ENCODE measurements at regions of chr11 and their contacts with region 1.

Region 1: DNA sequence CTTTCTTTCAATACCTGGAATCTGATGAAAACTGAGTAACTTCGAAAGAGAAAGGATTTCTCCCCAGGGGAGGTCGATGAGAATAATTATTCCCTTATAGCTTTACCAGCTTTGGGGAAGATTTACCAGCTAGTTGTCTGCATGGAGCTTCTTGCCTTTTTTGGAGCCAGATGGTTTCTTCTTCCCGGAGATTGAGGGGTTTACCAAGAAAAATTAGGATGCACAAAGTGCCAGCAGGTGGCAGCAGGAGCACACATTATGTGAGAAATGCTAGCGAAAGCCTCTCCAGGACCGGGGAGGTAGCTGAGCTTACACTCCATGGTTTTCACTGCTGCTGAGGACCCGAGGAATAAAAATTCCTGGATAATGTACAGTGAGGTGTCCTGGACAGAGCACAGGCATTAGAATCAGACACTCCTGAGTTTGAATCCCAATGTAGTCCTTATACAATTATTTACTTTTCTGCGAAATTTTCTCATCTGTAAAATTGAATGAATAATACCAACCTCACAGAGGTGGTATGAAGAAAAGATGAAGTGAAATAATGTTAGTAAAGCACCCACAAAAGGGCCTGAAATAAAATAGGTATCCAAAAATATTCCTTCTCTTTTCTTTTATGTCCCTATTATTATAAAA is 46.0 kb upstream of the PARVA start:
- DNase-seq: peak; percentile 61 to 68
- H3K4me3 ChIP-seq: no peak overlapping the region
- H3K27ac ChIP-seq: no peak overlapping the region
- H3K4me1 ChIP-seq: no peaks in the 10 kb centered on the region
- H3K27me3 ChIP-seq: no peaks in the 10 kb centered on the region
- CTCF ChIP-seq: peak; percentile 82

Region 2: DNA sequence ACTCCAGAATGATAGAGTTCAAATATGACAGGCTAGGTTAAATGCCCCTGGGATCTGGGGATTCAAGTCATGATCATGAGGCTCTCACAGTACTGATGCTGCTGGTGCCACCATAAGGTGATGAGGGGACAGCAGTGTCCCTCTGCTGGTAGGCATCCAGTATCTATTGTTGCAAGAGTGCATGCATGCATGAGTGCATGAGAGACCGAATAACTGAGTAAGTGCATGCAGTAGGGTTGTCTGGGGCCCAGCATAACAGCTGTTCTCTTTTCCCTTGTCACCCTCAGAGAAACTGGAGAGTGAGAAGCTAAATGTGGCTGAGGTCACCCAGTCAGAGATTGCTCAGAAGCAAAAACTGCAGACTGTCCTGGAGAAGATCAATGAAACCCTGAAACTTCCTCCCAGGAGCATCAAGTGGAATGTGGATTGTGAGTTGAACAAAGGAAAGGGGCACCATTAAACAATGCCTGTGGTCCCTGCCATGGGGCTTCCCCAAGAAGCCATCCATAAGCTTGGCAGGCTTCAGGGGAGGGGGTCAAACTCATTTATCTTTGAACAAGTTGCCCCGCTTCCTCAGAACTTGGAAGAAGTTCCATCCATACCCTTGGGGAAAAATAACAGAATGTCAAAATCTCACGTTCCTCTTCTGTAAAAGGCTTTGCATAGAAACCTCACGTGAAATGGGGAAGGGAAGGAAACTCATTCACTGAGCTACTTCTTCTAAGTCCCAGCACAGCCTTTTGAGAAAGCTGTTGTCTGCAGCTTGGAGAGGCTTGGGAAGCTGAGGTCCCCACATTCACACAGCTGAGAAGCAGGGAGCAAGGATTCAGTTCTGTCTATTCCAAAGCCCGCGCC is 165.0 kb after region 1 on chr11:
- CTCF ChIA-PET with region 1: no interaction called
- POLR2A ChIA-PET with region 1: no interaction called
- intact Hi-C with region 1: loop called (anchors 10 kb)
- DNase-seq: no peak
- H3K4me3 ChIP-seq: no peak overlapping the region
- H3K27ac ChIP-seq: no peak overlapping the region
- H3K4me1 ChIP-seq: peaks cover 5% of the 10 kb centered on the region; the same call in 1 of the 2 replicates
- H3K27me3 ChIP-seq: no peaks in the 10 kb centered on the region
- CTCF ChIP-seq: no peak

Region 3: DNA sequence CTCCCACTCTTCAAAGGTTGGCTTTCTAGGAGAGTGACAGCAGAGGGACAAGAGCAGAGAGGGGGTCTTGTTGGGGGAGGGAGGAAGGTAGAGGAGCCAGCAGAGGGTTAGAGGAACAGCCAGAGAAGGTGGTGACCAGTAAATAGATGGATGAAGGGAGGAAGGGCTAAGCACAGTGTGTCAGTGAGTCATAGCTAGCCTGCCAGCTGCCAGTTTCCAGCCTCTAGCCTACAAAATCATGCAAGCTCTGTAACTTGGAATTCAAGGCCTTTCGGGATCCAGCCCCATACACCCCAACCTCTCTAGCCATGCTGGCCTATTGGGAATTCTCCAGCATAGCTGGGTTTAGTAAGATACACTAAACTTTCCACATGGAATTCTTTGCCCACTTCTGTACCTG is 195.4 kb after region 1 on chr11:
- CTCF ChIA-PET with region 1: no interaction called
- POLR2A ChIA-PET with region 1: no interaction called
- intact Hi-C with region 1: no loop called
- DNase-seq: no peak
- H3K4me3 ChIP-seq: no peak overlapping the region
- H3K27ac ChIP-seq: no peak overlapping the region
- H3K4me1 ChIP-seq: no peaks in the 10 kb centered on the region
- H3K27me3 ChIP-seq: no peaks in the 10 kb centered on the region
- CTCF ChIP-seq: no peak

Region 4: DNA sequence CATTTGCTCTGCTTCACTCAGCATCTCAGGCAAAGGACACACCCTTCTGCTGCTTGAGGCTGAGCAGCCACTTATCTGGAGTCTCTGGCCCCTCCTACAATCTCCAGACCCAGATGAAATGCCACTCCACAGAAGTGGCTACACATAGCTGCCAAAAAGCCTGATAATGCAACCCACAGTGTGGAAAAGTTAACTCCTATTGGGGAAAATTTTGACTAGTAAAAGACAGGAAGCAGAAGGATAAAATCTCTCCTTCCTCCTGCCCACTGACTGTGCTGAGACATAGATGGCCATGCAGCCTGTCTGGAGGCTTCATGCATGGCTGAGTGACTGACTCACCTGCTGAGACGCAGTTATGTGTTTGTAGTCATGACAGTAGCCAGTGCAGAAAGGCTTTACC is 250.6 kb after region 1 on chr11:
- CTCF ChIA-PET with region 1: no interaction called
- POLR2A ChIA-PET with region 1: no interaction called
- intact Hi-C with region 1: loop called (anchors 5 kb)
- DNase-seq: peak; percentile 43 to 77
- H3K4me3 ChIP-seq: no peak overlapping the region
- H3K27ac ChIP-seq: no peak overlapping the region
- H3K4me1 ChIP-seq: peaks cover 14% of the 10 kb centered on the region
- H3K27me3 ChIP-seq: no peaks in the 10 kb centered on the region
- CTCF ChIP-seq: no peak

Region 5: GRCh38 chr11:12893787-12894672 is 562.7 kb after region 1 on chr11:
- CTCF ChIA-PET with region 1: interaction called, 4 read pairs
- POLR2A ChIA-PET with region 1: no interaction called
- intact Hi-C with region 1: loop called (anchors 1 kb)
- DNase-seq: peak; percentile 55 to 72
- H3K4me3 ChIP-seq: no peak overlapping the region
- H3K27ac ChIP-seq: no peak overlapping the region
- H3K4me1 ChIP-seq: no peaks in the 10 kb centered on the region
- H3K27me3 ChIP-seq: no peaks in the 10 kb centered on the region
- CTCF ChIP-seq: peak; percentile 85

Measured in PC-9 (cell line).